Common myeloid progenitor, CD34-positive (primary cell): ENCODE measurements at regions of chr1 and their contacts with region 1.

Region 1: DNA sequence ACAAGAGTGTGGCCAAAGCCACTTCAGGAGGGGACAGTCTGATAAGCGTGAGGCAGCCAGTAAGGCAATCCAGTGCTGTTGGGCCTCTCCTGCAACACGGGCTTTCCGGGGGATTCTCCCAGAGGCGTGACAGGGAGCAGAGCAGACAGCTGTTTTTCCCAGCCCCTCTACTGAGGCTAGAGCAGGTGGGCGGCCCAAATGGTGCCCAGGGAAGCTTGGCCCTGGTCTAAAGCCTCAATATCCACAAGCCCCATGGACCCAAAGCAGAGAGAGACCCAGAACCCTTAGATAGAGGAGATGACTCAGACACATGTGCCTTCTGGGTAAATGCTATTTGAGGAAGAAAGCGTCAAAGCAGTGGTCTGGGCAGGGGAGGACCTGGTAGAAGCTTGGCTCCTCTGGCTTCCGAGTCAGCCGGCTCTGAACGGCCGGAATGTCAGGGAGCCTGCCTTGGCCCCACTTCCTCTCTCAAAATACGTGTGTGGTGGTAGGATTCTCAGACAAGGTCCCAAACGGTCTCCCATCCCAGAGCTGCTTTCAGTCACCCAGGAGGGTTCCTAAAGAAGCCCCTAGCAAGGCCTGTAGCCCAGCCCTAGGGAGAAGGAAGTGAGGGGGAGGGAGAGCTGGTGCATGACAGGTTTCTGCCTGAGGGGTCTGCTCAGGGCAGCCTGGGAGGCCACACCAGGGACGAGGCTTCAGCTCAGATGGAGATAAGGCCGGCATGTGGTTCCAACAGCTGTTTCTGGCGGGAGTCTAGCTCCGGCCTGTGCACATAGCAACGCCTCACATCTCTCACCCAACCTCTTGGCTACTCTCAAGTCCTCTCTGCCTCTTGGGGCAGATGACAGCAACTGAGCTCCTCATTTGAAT is 28.8 kb downstream of the PIK3C2B start:
- DNase-seq: peak; percentile 71 to 90 (median 84)
- H3K4me3 ChIP-seq: peak overlapping the region in 2 of 7 experiments; percentile 11 to 24
- H3K27ac ChIP-seq: peak overlapping the region in 1 of 2 experiments; percentile 1
- H3K4me1 ChIP-seq: peaks cover 12 to 70% (median 64%) of the 10 kb centered on the region in 4 experiments
- H3K27me3 ChIP-seq: no peaks in the 10 kb centered on the region

Region 2: DNA sequence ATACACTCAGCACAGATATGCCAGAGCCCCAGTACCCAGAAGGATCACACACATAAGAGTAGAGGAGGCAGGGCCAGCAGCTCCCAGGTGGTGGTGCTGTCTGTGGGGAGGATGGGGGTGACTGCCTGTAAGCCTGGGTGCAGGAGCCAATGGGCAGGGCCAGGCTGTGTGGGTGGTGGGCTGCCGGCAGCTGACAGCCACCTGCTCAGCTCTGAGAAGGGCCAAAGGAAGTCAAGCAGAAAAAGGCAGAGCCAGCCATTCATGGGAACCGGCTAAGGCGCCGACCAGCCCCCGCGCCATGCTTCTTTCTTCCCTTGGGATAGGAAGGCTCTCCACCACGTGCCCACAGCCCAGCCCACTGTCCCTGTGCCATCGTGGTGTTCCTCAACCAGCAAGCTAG is 14.7 kb after region 1 on chr1:
- CTCF ChIA-PET with region 1: interaction called, 133 read pairs
- POLR2A ChIA-PET with region 1: interaction called, 3 read pairs
- DNase-seq: no peak
- H3K4me3 ChIP-seq: no peak overlapping the region
- H3K27ac ChIP-seq: no peak overlapping the region
- H3K4me1 ChIP-seq: peaks cover 8 to 90% (median 51%) of the 10 kb centered on the region in 4 experiments
- H3K27me3 ChIP-seq: no peaks in the 10 kb centered on the region

Region 3: DNA sequence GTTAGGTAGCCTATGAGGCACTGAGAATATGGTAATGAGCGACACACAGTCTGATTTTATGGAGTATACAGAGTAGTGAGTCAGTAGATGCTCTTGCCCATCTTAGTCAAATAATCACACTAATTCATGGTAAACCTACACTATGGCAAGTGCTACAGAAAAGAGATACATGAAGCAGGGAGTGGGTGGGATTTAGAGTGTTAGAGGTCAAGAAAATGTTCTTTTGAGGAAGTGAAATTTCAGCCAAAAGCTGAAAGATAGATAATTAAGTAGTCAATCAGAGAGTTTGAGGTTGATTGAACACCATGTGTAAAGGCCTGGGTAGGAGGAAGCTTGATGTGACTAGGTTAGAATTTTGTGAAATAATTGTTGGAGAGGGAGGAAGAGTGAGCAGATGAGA is 65.2 kb after region 1 on chr1:
- CTCF ChIA-PET with region 1: no interaction called
- POLR2A ChIA-PET with region 1: no interaction called
- DNase-seq: no peak
- H3K4me3 ChIP-seq: no peak overlapping the region
- H3K27ac ChIP-seq: no peak overlapping the region
- H3K4me1 ChIP-seq: no peaks in the 10 kb centered on the region
- H3K27me3 ChIP-seq: no peaks in the 10 kb centered on the region